ENCODE measurements at regions of chr3 and their contacts with region 1.

Region 1: DNA sequence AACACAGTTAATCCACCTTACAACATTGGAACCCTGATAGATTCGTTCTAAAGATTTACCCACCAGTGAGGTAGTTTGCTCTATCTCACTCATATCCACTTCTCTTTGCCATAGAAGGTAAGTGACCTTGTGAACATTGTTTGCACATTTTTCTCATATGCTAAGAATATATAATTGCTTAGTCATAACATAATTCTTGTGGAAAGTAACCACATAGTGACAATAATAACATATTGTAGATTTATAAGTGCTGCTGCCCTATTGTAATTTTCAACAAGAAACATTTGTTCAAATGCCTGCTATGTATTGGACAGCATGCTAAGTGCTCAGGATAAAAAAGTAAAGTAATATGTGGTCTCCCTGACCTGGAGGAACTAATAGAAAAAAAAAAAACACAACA is 554.2 kb upstream of the KCNMB2 start:
- DNase-seq: no peak
- H3K4me3 ChIP-seq: no peak overlapping the region
- H3K27ac ChIP-seq: no peak overlapping the region
- H3K4me1 ChIP-seq: no peaks in the 10 kb centered on the region
- H3K27me3 ChIP-seq: no peaks in the 10 kb centered on the region
- CTCF ChIP-seq: no peak
- POLR2A ChIP-seq: no peak

Region 2: GRCh38 chr3:176442326-176442725 is 1539.7 kb before region 1 on chr3:
- intact Hi-C with region 1: loop called (anchors 5 kb)
- DNase-seq: no peak
- H3K4me3 ChIP-seq: no peak overlapping the region
- H3K27ac ChIP-seq: no peak overlapping the region
- H3K4me1 ChIP-seq: no peaks in the 10 kb centered on the region
- H3K27me3 ChIP-seq: no peaks in the 10 kb centered on the region
- CTCF ChIP-seq: no peak
- POLR2A ChIP-seq: no peak

Region 3: DNA sequence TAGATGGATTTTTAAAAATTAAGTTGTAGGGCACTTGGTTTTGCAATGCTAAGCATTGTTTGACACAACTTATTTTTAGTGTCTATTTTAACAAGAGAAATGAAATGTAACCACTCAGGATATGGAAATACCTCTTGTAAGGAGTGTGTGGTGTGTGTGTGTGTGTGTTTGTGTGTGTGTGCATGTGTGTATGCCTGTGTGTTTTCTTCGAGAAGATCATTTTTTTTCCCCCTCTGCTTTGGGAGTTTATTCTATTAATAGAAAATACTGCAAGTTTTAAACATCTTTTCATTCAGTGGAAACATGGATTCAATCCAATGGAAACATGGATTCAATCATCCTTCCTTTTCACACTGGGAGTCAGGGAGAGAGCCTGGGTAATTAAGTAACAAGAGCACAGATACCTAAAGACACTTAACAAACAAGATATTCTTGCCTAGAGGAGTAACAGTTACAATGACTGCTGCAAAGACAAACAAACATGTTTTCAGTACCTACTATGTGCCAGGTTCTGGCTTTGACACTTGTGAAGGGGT is 217.6 kb before region 1 on chr3:
- intact Hi-C with region 1: no loop called
- DNase-seq: no peak
- H3K4me3 ChIP-seq: no peak overlapping the region
- H3K27ac ChIP-seq: peak overlapping the region; percentile 40
- H3K4me1 ChIP-seq: peaks cover 9% of the 10 kb centered on the region
- H3K27me3 ChIP-seq: no peaks in the 10 kb centered on the region
- CTCF ChIP-seq: no peak
- POLR2A ChIP-seq: no peak

Measured in vagina (tissue), 2 donors.